ENCODE measurements at regions of chr16 and their contacts with region 1.

Region 1: DNA sequence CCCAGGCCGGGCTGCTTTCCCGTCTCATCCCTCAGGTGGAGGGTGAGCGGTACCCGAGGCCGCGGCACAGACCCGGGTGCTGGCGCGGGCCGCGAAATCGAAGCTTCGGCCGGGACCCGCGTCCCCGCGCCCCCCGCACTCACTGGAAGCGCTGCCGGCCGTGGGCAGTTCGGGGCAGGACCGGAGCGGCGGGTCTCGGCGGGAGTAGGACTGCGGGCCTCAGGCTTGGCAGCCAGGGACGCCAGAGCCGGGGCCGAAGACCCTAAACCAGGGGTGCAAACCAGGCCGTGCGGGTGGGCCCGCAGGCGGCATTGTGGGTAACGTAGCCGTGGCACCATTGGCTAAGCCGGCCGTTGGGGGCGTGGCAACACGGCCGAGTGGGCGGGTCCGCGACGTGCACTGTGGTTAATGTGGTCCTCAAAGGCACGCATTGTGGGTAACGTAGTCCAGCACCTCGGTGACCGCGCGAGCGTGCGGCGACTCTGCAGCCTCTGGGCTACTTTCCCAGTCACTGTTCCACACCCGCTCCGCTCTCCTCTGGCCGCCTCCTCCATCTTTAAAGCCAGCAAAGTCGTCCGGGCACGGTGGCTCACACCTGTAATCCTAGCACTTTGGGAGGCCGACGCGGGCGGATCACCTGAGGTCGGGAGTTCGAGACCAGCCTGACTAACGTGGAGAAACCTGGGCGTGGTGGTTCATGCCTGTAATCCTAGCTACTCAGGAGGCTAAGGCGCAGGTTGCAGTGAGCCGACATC is at the start of gene ZNF500:
- DNase-seq: peak; percentile 99
- H3K4me3 ChIP-seq: peak within 1 kb of the TSS; percentile 34 to 97 (median 93)
- H3K27ac ChIP-seq: peak within 1 kb of the TSS; percentile 75 to 80 (median 77)
- H3K4me1 ChIP-seq: peaks cover 6 to 21% of the 10 kb centered on the region in 2 donors
- H3K27me3 ChIP-seq: no peaks in the 10 kb centered on the region
- CTCF ChIP-seq: no peak
- POLR2A ChIP-seq: peak in 1 of 2 donors; percentile 72
- total RNA-seq, gene ZNF500: 11.8 to 20.6 (median 17.6) TPM

Region 2: DNA sequence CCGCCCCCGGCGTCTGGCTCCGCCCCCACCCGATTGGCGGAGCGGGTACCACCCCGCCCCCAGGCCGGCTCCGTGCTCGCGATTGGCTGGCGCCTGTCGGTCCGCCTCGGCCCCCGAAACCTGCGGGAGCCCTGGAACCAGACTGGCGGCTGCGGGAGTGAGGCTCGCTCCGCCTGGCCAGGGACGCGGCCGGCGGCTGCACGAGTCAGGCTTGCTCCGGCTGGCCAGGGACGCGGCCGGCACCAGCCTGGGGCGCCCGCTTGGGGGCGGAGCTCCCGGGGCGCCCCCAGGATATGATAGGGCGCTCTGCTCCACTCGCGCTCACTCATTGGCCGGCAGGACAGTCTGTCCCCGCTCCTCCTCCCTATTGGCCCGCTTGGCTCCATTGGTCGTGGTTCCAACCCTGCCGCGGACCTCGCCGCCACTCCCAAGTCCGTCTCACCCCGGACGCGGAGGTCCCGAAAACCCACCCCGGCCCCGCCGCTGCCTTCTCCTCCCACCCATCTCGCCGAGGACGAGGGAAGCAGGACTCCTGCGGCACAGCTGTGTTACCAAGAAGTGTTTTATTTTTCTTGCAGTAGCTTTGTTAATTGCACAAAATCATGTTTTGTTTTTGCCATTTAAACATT is 35.7 kb after region 1 on chr16:
- intact Hi-C with region 1: loop called (anchors 5 kb)
- DNase-seq: peak; percentile 92
- H3K4me3 ChIP-seq: peak overlapping the region; percentile 45 to 80 (median 58)
- H3K27ac ChIP-seq: peak overlapping the region in 2 of 3 donors; percentile 38 to 74
- H3K4me1 ChIP-seq: peaks cover 8% of the 10 kb centered on the region in 2 donors
- H3K27me3 ChIP-seq: no peaks in the 10 kb centered on the region
- CTCF ChIP-seq: no peak
- POLR2A ChIP-seq: peak in 1 of 2 donors; percentile 22